ENCODE measurements at regions of chr18 and their contacts with region 1.

Region 1: GRCh38 chr18:76450452-76451395 is 44.3 kb downstream of the ZNF516 start:
- DNase-seq: no peak
- H3K4me3 ChIP-seq: peak overlapping the region; percentile 58 to 70 (median 64)
- H3K27ac ChIP-seq: peak overlapping the region; percentile 82 to 90 (median 86)
- H3K4me1 ChIP-seq: peaks cover 52 to 93% (median 90%) of the 10 kb centered on the region in 4 donors
- H3K27me3 ChIP-seq: no peaks in the 10 kb centered on the region
- CTCF ChIP-seq: no peak
- EP300 ChIP-seq: no peak
- POLR2A ChIP-seq: no peak

Region 2: DNA sequence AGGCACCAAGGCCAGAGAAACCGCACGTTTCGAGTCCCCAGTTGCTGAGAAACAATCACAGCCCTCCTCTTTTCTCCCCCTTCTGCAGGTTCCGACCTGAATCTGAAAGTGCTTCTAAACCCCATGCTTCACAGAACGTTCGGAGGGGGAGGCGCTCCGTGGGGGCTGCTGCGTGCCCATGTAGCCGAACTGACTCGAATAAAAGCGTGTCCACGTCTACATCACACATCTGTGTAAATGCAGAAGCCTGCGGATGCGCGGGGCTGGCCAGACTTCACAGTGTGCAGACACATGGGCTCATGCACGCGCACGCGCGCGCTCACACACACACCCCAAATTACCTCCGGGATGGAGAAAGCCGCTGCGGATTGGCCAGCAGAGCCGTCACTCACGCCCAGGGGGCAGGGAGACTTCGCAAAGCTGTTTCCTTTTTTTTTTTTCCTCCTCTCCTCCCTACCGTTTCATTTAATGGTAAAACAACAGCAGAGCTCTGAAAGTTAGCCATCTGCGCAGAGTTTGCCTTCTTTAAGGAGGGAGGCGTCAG is 42.0 kb after region 1 on chr18:
- intact Hi-C with region 1: loop called (anchors 5 kb)
- DNase-seq: peak; percentile 99
- H3K4me3 ChIP-seq: peak overlapping the region; percentile 71 to 89 (median 83)
- H3K27ac ChIP-seq: peak overlapping the region; percentile 86 to 91 (median 90)
- H3K4me1 ChIP-seq: peaks cover 16 to 56% (median 43%) of the 10 kb centered on the region in 4 donors
- H3K27me3 ChIP-seq: no peaks in the 10 kb centered on the region
- CTCF ChIP-seq: no peak
- EP300 ChIP-seq: no peak
- POLR2A ChIP-seq: no peak